Psoas muscle (tissue), 8 donors: ENCODE measurements at regions of chr7 and their contacts with region 1.

Region 1: GRCh38 chr7:11434366-11434765 is 397.6 kb downstream of the THSD7A start:
- DNase-seq: no peak
- ATAC-seq: no peak
- H3K4me3 ChIP-seq: no peak overlapping the region
- H3K27ac ChIP-seq: no peak overlapping the region
- H3K4me1 ChIP-seq: no peaks in the 10 kb centered on the region
- H3K27me3 ChIP-seq: no peaks in the 10 kb centered on the region
- CTCF ChIP-seq: no peak

Region 2: GRCh38 chr7:12315049-12315448 is 880.7 kb after region 1 on chr7:
- intact Hi-C with region 1: loop called in 1 of 2 experiments (anchors 5 kb)
- DNase-seq: no peak
- ATAC-seq: no peak
- H3K4me3 ChIP-seq: no peak overlapping the region
- H3K27ac ChIP-seq: no peak overlapping the region
- H3K4me1 ChIP-seq: no peaks in the 10 kb centered on the region
- H3K27me3 ChIP-seq: no peaks in the 10 kb centered on the region
- CTCF ChIP-seq: no peak